ENCODE measurements at regions of chr15 and their contacts with region 1.

Region 1: GRCh38 chr15:76330080-76330680 is 6.4 kb upstream of the ISL2 start:
- H3K4me3 ChIP-seq: no peak overlapping the region
- H3K27ac ChIP-seq: no peak overlapping the region
- H3K4me1 ChIP-seq: peaks cover 9% of the 10 kb centered on the region
- CTCF ChIP-seq: no peak

Region 2: GRCh38 chr15:76235186-76235826 is 94.9 kb before region 1 on chr15:
- CTCF ChIA-PET with region 1: interaction called, 32 read pairs
- POLR2A ChIA-PET with region 1: no interaction called
- H3K4me3 ChIP-seq: no peak overlapping the region
- H3K27ac ChIP-seq: no peak overlapping the region
- H3K4me1 ChIP-seq: peaks cover 28% of the 10 kb centered on the region
- CTCF ChIP-seq: peak; percentile 24; the same call in 1 of the 2 replicates

Measured in HEK293 (cell line).